ENCODE measurements at regions of chr5 and their contacts with region 1.

Region 1: GRCh38 chr5:169024456-169024855 is 276.5 kb downstream of the SLIT3 start:
- DNase-seq: no peak
- H3K4me3 ChIP-seq: no peak overlapping the region
- H3K27ac ChIP-seq: no peak overlapping the region
- H3K4me1 ChIP-seq: no peaks in the 10 kb centered on the region
- H3K27me3 ChIP-seq: no peaks in the 10 kb centered on the region; a peak in 1 of 7 replicates
- CTCF ChIP-seq: no peak
- EP300 ChIP-seq: no peak
- POLR2A ChIP-seq: no peak
- RAD21 ChIP-seq: no peak

Region 2: DNA sequence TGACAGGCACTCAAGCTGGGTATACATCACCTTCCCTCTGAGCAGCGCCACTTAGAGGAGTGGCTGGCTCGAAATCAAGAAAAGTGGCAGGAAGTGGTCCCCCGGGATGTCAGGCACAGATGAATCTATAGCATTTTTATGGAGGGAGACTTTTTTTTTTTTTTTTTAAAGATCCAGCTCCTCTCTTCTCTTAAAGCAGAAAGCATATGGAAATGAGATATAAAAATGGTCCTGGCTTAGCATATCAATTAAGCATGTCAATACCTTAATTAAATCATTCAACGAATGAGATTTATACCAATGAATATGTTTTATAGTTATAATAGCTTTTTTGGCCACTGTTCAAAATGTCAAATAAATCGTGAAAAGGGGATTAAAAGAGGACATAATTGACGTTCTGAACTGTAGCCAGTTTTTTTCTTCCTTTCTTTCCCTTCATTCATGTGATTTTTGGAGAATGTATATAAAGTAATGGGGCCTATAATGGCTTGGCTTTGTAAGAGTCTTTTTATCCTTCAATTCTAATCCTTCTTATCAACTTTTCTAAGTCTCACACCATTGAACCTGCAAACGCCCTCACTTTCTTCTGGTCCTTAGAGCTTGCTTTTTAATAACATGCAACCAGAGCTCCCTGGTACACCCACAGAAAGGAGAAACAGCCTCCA is 126.1 kb before region 1 on chr5:
- CTCF ChIA-PET with region 1: no interaction called
- POLR2A ChIA-PET with region 1: no interaction called
- DNase-seq: no peak
- H3K4me3 ChIP-seq: no peak overlapping the region
- H3K27ac ChIP-seq: no peak overlapping the region
- H3K4me1 ChIP-seq: peaks cover 0 to 2% (median under 1%) of the 10 kb centered on the region in 4 experiments; a peak in 3 of 7 replicates
- H3K27me3 ChIP-seq: no peaks in the 10 kb centered on the region
- CTCF ChIP-seq: no peak
- EP300 ChIP-seq: no peak
- POLR2A ChIP-seq: no peak
- RAD21 ChIP-seq: no peak

Region 3: DNA sequence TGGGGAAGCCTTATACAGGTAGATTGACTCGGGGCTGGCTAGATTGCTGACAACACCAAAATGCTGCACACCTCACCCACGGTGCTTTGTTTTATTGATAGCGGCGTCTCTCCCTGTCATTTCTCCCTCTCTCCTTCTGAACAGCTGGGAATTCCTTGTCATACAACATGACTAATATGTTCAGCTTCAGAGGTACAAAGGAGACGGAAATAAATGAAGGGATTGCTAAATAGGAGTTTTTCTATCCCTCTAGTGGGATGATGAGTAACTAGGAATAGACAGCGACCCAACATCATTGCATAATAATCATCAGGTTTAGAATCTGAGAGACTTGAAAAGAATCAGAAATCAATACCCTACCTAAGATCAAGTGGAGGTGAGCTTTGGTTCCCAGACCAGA is 107.6 kb before region 1 on chr5:
- CTCF ChIA-PET with region 1: no interaction called
- POLR2A ChIA-PET with region 1: no interaction called
- DNase-seq: no peak
- H3K4me3 ChIP-seq: no peak overlapping the region
- H3K27ac ChIP-seq: no peak overlapping the region
- H3K4me1 ChIP-seq: peaks cover 0 to 6% (median 0%) of the 10 kb centered on the region in 4 experiments; a peak in 1 of 7 replicates
- H3K27me3 ChIP-seq: no peaks in the 10 kb centered on the region
- CTCF ChIP-seq: no peak
- EP300 ChIP-seq: no peak
- POLR2A ChIP-seq: no peak
- RAD21 ChIP-seq: no peak

Region 4: GRCh38 chr5:169003721-169004541 is 20.5 kb before region 1 on chr5:
- CTCF ChIA-PET with region 1: interaction called, 11 read pairs
- POLR2A ChIA-PET with region 1: no interaction called
- DNase-seq: no peak
- H3K4me3 ChIP-seq: no peak overlapping the region
- H3K27ac ChIP-seq: no peak overlapping the region
- H3K4me1 ChIP-seq: peaks cover 3 to 13% (median 10%) of the 10 kb centered on the region in 4 experiments; a peak in 5 of 7 replicates
- H3K27me3 ChIP-seq: no peaks in the 10 kb centered on the region
- CTCF ChIP-seq: peak; percentile 56 to 69 (median 65)
- EP300 ChIP-seq: no peak
- POLR2A ChIP-seq: no peak
- RAD21 ChIP-seq: peak; percentile 67 to 80

Measured in H1 (cell line).